Ovary (tissue), 10 donors: ENCODE measurements at regions of chr17 and their contacts with region 1.

Region 1: DNA sequence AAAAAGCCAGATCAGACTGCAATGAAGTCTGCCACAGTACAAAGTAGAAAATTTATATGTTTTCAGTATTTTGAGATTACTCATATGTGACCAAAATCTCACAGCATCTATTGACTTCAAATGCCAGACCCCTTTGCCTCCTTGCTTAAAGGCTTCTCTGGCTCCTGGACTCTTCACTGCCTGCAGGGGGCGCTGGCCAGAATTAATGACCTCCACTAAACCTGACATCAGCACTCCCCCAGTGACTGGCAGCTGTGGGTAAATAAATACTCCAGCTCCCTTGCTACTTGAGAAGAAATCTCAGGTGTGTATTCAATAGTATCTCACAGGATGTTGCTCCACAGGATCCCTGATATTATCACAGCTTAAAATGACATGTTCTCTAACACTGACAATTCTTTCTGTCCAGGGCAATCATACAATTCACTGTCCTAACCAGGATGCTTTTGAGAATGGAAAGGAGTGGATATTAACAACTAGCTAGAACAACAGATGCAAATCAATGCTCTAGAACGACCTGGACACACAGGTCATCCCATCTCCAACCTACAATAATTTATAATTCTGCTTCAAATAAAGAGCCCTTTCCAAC is 4.0 kb downstream of the BECN1 start:
- DNase-seq: no peak
- H3K4me3 ChIP-seq: no peak overlapping the region
- H3K27ac ChIP-seq: no peak overlapping the region
- H3K4me1 ChIP-seq: peaks cover 4% of the 10 kb centered on the region
- H3K27me3 ChIP-seq: no peaks in the 10 kb centered on the region
- CTCF ChIP-seq: no peak
- EP300 ChIP-seq: no peak
- POLR2A ChIP-seq: no peak

Region 2: GRCh38 chr17:42467859-42468258 is 352.2 kb before region 1 on chr17:
- intact Hi-C with region 1: loop called in 1 of 4 experiments (anchors 5 kb)
- DNase-seq: no peak
- H3K4me3 ChIP-seq: no peak overlapping the region
- H3K27ac ChIP-seq: no peak overlapping the region
- H3K4me1 ChIP-seq: no peaks in the 10 kb centered on the region
- H3K27me3 ChIP-seq: no peaks in the 10 kb centered on the region
- CTCF ChIP-seq: no peak
- EP300 ChIP-seq: no peak
- POLR2A ChIP-seq: no peak

Region 3: DNA sequence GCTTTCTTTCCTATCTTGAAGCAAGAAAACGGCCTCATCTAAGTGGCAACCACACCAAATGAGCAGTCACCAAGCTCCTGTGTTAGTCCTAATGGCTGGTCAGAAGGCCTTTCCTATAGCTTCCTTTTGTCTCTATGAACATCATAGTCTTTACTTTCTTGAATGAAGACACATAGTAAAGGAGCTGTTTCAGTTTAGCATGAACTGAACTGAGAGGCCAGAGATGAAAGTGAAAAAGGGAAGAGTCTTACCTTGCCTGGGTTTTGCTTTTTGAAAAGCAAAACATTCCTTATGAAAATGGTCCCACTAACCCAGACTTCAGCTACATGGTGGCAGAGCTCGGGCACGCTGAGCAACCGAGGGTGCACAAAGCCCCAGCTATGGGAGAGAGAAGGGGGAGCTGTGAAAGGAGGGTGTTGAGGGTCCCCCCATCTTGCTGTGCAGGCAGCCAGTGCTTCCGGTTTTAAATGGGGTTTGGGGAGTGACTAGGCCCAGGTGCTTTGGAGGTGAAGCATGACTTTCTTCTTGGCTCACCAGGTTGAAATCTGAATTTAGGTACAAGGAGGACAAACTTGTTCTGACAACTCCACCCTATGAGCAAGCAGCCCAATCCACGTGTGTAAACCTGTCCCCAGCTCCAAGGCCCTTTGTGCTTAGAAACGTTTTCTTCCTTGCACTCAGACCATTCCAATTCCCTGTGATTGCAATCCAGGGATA is 233.4 kb before region 1 on chr17:
- intact Hi-C with region 1: loop called in 1 of 4 experiments (anchors 10 kb)
- DNase-seq: peak in 1 of 5 donors; percentile 3
- H3K4me3 ChIP-seq: no peak overlapping the region
- H3K27ac ChIP-seq: no peak overlapping the region
- H3K4me1 ChIP-seq: peaks cover 2% of the 10 kb centered on the region
- H3K27me3 ChIP-seq: no peaks in the 10 kb centered on the region
- CTCF ChIP-seq: no peak
- EP300 ChIP-seq: no peak
- POLR2A ChIP-seq: no peak